ENCODE measurements at regions of chr9 and their contacts with region 1.

Region 1: DNA sequence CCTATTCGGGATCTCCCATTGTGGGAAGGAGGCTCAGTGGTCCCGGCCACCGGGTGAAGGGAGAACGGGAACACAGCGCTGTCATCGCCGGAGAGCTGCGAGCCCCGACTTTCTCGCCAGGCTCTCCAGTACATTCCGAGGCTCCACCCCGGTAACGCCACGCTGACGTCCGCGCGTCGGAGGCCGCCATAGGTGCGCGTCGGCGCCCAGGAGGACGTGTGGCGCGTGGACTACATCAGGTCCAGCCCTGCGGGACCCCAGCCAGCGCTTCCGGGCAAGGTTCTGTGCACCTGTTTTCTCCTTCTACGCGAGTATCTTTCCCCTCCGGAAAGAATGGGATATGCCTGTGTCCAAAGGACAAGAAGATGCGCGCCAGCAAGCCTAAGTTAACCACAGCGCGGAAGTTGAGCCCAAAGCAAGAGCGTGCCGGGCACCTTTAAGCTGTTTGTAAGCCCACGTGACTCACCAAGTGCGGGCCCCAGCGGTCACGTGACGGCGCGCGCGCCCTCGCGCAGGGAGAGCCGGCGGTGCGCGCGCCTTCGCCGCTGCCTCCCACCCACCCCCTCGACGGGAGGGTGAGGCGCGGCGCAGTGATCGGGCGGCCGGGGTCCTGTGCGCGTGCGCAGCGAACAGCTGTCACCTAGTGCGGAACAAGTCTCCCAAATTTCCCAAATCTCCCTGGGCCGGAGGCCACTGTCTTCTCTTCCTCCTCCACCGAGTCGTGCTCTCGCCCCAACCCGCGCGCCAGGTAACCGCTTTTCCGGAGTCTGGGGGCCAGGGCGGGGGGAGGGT is at the start of gene KDM4C:
- DNase-seq: peak; percentile 98
- ATAC-seq: peak; percentile 97
- H3K4me3 ChIP-seq: peak within 1 kb of the TSS; percentile 86 to 95
- H3K27ac ChIP-seq: peak within 1 kb of the TSS; percentile 90 to 91
- H3K4me1 ChIP-seq: no peaks in the 10 kb centered on the region
- H3K27me3 ChIP-seq: no peaks in the 10 kb centered on the region
- total RNA-seq, gene KDM4C: 40.2 to 54.4 TPM

Region 2: GRCh38 chr9:6008169-6008979 is 749.3 kb before region 1 on chr9:
- intact Hi-C with region 1: loop called in 1 of 2 experiments (anchors 5 kb)
- DNase-seq: peak; percentile 96 to 97
- ATAC-seq: peak; percentile 96
- H3K4me3 ChIP-seq: peak overlapping the region; percentile 90 to 95
- H3K27ac ChIP-seq: peak overlapping the region; percentile 55 to 98
- H3K4me1 ChIP-seq: peaks cover 0 to 2% of the 10 kb centered on the region in 2 donors
- H3K27me3 ChIP-seq: no peaks in the 10 kb centered on the region

Region 3: GRCh38 chr9:6681147-6681956 is 76.3 kb before region 1 on chr9:
- intact Hi-C with region 1: loop called in 1 of 2 experiments (anchors 1 kb)
- DNase-seq: peak; percentile 98 to 99
- ATAC-seq: peak; percentile 99
- H3K4me3 ChIP-seq: peak overlapping the region; percentile 49 to 72
- H3K27ac ChIP-seq: peak overlapping the region; percentile 88 to 95
- H3K4me1 ChIP-seq: no peaks in the 10 kb centered on the region
- H3K27me3 ChIP-seq: no peaks in the 10 kb centered on the region

Region 4: GRCh38 chr9:6703898-6704639 is 53.6 kb before region 1 on chr9:
- intact Hi-C with region 1: loop called in 1 of 2 experiments (anchors 5 kb)
- DNase-seq: peak; percentile 92 to 95
- ATAC-seq: peak; percentile 92
- H3K4me3 ChIP-seq: peak overlapping the region; percentile 22 to 27
- H3K27ac ChIP-seq: peak overlapping the region in 1 of 2 donors; percentile 2
- H3K4me1 ChIP-seq: no peaks in the 10 kb centered on the region
- H3K27me3 ChIP-seq: no peaks in the 10 kb centered on the region

Region 5: DNA sequence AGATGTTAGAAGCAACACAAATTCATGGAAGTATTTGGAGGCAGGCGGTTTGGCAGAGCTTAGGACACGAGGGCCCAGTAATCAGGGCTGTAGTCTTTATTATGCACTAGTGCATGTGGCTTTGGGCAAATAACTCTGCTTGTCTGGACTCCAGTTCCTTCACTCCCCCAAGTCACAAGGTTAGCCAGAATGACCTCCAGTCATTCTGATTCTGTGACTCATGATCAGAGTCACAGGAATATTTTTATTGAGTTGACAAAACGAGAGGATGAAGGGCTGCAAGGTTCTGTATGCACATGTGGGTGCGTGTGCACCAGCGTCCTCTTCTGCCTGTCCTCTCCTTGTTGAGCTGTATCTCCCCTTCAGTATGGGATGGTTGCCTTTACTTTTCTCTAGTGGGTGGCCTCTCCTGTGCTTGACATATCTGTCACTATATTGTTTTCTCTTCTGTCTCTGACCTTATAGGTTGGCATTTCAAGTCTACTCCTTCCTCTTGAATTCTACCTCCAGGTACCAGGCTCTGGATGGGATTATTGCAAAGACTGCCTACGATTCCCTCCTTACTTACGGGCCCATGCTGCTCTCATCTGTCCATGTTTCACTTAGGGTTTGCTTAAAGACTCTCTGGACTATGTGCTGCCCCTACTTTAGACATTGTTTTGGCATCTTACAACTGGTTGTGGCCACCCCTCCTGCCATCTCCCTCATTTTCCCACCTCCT is 94.8 kb after region 1 on chr9:
- intact Hi-C with region 1: loop called in 1 of 2 experiments (anchors 10 kb)
- DNase-seq: no peak
- ATAC-seq: no peak
- H3K4me3 ChIP-seq: no peak overlapping the region
- H3K27ac ChIP-seq: peak overlapping the region in 1 of 2 donors; percentile 9
- H3K4me1 ChIP-seq: no peaks in the 10 kb centered on the region
- H3K27me3 ChIP-seq: no peaks in the 10 kb centered on the region

Measured in aorta (tissue), 5 donors.